Activated CD8-positive, alpha-beta T cell treated with anti-CD3 and anti-CD28 coated beads, Interleukin-2, amount 10 ng/mL, durations not matched to agents 7 days and 5 days (primary cell): ENCODE measurements at regions of chr19 and their contacts with region 1.

Region 1: GRCh38 chr19:18846862-18847548 is 15.2 kb downstream of the UPF1 start:
- DNase-seq: peak; percentile 74
- ATAC-seq: peak; percentile 78
- H3K4me3 Mint-ChIP-seq: no peak overlapping the region
- H3K27ac Mint-ChIP-seq: peak overlapping the region; percentile 60
- H3K4me1 Mint-ChIP-seq: peaks cover 69% of the 10 kb centered on the region
- H3K27me3 Mint-ChIP-seq: no peaks in the 10 kb centered on the region

Region 2: GRCh38 chr19:18460900-18461299 is 386.1 kb before region 1 on chr19:
- CTCF ChIA-PET with region 1: interaction called, 10 read pairs
- POLR2A ChIA-PET with region 1: no interaction called
- DNase-seq: no peak
- ATAC-seq: no peak
- H3K4me3 Mint-ChIP-seq: no peak overlapping the region
- H3K27ac Mint-ChIP-seq: no peak overlapping the region
- H3K4me1 Mint-ChIP-seq: peaks cover 20% of the 10 kb centered on the region
- H3K27me3 Mint-ChIP-seq: no peaks in the 10 kb centered on the region

Region 3: GRCh38 chr19:18571564-18572300 is 275.3 kb before region 1 on chr19 and contains the start of gene UBA52:
- CTCF ChIA-PET with region 1: interaction called, 11 read pairs
- POLR2A ChIA-PET with region 1: interaction called, 3 read pairs
- DNase-seq: peak; percentile 99
- ATAC-seq: peak; percentile 92
- H3K4me3 Mint-ChIP-seq: peak within 1 kb of the TSS; percentile 80
- H3K27ac Mint-ChIP-seq: peak within 1 kb of the TSS; percentile 89
- H3K4me1 Mint-ChIP-seq: peaks cover 31% of the 10 kb centered on the region
- H3K27me3 Mint-ChIP-seq: no peaks in the 10 kb centered on the region
- total RNA-seq, gene UBA52: 1,452 to 1,556 TPM

Region 4: DNA sequence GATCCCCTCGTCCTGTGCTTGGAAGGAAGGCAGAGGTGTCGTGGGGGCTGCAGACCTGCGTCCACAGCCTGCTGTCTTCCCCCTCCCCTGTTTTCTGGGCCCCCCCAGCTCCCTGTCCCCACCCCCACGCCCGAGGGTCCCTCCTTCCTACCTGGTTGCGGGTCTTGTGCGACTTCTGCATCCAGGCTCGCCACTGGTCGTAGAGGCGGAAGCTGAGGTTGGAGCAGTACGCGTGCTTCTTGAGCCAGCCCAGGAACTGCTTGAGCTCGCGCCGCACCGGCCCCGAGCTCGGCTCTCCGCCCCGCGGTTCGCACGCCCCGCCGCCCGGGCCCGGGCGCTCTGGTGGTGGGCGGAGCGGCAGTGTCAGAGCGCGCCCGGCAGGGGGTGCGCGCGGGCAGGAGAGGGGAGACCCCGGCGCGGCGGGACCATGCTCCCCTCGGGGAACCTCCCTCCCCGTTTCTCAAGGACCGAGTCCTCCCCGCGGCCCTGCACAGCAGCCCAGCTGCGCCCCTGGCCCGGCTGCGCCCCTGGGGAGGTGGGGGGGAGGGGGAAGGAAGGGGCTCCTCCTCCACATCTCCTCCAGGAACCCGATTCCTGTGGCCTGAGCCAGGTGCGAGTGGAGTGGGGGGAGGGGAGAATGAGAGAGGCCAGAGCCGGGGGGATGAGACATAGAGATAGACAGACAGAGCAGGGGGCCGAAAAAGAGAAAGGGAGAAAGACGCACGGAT is 252.7 kb before region 1 on chr19:
- CTCF ChIA-PET with region 1: interaction called, 23 read pairs
- POLR2A ChIA-PET with region 1: interaction called, 3 read pairs
- DNase-seq: peak; percentile 75
- ATAC-seq: peak; percentile 59
- H3K4me3 Mint-ChIP-seq: peak overlapping the region; percentile 64
- H3K27ac Mint-ChIP-seq: no peak overlapping the region
- H3K4me1 Mint-ChIP-seq: peaks cover 29% of the 10 kb centered on the region
- H3K27me3 Mint-ChIP-seq: peaks cover 2% of the 10 kb centered on the region

Region 5: DNA sequence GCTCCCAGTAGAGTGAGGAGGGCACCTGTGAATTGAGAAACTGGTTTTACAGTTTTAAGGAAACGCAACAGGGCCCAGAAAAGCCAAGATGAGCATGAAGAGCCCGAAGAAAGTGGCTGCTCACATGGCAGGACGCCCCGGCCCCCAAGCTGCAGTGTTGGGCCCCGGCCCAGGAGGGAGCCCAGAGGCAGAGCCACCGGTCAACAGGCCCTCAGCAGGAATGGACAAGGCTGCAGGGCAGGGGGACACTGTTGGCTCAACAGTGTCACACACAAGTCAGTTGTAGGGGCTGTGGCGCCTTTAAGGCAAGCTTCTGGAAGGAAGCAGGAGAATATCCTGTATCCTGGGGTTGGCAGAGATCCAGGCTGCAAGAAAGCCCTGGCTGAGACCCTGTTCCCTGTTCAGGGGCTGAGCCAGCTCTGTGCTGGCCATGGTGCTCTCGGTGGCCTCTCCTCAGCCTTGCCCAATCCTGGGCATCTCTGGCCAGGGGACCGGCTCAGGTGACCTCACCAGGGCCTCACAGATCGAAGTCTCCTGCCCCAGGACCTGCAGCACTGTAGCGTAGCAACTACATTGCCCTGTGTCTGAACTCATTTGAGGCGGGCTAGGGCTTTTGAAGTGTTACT is 12.8 kb after region 1 on chr19:
- CTCF ChIA-PET with region 1: interaction called, 13 read pairs
- POLR2A ChIA-PET with region 1: no interaction called
- DNase-seq: no peak
- ATAC-seq: no peak
- H3K4me3 Mint-ChIP-seq: no peak overlapping the region
- H3K27ac Mint-ChIP-seq: no peak overlapping the region
- H3K4me1 Mint-ChIP-seq: no peaks in the 10 kb centered on the region
- H3K27me3 Mint-ChIP-seq: no peaks in the 10 kb centered on the region